ENCODE measurements at regions of chr7 and their contacts with region 1.

Region 1: GRCh38 chr7:44606450-44607254 is at the start of gene OGDH:
- DNase-seq: peak; percentile 98
- H3K4me3 ChIP-seq: peak within 1 kb of the TSS; percentile 60 to 87
- H3K27ac ChIP-seq: peak within 1 kb of the TSS; percentile 94 to 99
- H3K4me1 ChIP-seq: no peaks in the 10 kb centered on the region
- H3K27me3 ChIP-seq: no peaks in the 10 kb centered on the region
- CTCF ChIP-seq: peak in 1 of 4 experiments; percentile 26
- POLR2A ChIP-seq: peak; percentile 96
- total RNA-seq, gene OGDH: 70.4 to 96.9 TPM

Region 2: GRCh38 chr7:44348300-44348699 is 258.4 kb before region 1 on chr7:
- intact Hi-C with region 1: no loop called
- DNase-seq: no peak
- H3K4me3 ChIP-seq: no peak overlapping the region
- H3K27ac ChIP-seq: no peak overlapping the region
- H3K4me1 ChIP-seq: no peaks in the 10 kb centered on the region
- H3K27me3 ChIP-seq: no peaks in the 10 kb centered on the region
- CTCF ChIP-seq: no peak
- POLR2A ChIP-seq: no peak

Region 3: GRCh38 chr7:44581879-44582603 is 24.6 kb before region 1 on chr7 and contains the start of gene TMED4:
- intact Hi-C with region 1: loop called (anchors 2 kb)
- DNase-seq: peak; percentile 100
- H3K4me3 ChIP-seq: peak within 1 kb of the TSS; percentile 73 to 77
- H3K27ac ChIP-seq: peak within 1 kb of the TSS; percentile 92 to 95
- H3K4me1 ChIP-seq: peaks cover 4% of the 10 kb centered on the region
- H3K27me3 ChIP-seq: no peaks in the 10 kb centered on the region
- CTCF ChIP-seq: peak in 2 of 4 experiments; percentile 21 to 29
- POLR2A ChIP-seq: peak; percentile 82
- total RNA-seq, gene TMED4: 227 to 243 TPM

Region 4: GRCh38 chr7:44748045-44748947 is 141.6 kb after region 1 on chr7 and contains the start of gene ZMIZ2:
- intact Hi-C with region 1: loop called (anchors 10 kb)
- DNase-seq: peak; percentile 94
- H3K4me3 ChIP-seq: peak within 1 kb of the TSS; percentile 80 to 91
- H3K27ac ChIP-seq: peak within 1 kb of the TSS; percentile 94 to 96
- H3K4me1 ChIP-seq: peaks cover 3% of the 10 kb centered on the region
- H3K27me3 ChIP-seq: no peaks in the 10 kb centered on the region
- CTCF ChIP-seq: no peak
- POLR2A ChIP-seq: peak; percentile 51
- total RNA-seq, gene ZMIZ2: 27.1 to 42.8 TPM

Region 5: GRCh38 chr7:44797329-44798251 is 190.9 kb after region 1 on chr7:
- intact Hi-C with region 1: loop called (anchors 2 kb)
- DNase-seq: peak; percentile 92
- H3K4me3 ChIP-seq: peak overlapping the region; percentile 91 to 94
- H3K27ac ChIP-seq: peak overlapping the region; percentile 100
- H3K4me1 ChIP-seq: peaks cover 3% of the 10 kb centered on the region
- H3K27me3 ChIP-seq: no peaks in the 10 kb centered on the region
- CTCF ChIP-seq: peak; percentile 19 to 58 (median 43)
- POLR2A ChIP-seq: peak; percentile 70

Region 6: DNA sequence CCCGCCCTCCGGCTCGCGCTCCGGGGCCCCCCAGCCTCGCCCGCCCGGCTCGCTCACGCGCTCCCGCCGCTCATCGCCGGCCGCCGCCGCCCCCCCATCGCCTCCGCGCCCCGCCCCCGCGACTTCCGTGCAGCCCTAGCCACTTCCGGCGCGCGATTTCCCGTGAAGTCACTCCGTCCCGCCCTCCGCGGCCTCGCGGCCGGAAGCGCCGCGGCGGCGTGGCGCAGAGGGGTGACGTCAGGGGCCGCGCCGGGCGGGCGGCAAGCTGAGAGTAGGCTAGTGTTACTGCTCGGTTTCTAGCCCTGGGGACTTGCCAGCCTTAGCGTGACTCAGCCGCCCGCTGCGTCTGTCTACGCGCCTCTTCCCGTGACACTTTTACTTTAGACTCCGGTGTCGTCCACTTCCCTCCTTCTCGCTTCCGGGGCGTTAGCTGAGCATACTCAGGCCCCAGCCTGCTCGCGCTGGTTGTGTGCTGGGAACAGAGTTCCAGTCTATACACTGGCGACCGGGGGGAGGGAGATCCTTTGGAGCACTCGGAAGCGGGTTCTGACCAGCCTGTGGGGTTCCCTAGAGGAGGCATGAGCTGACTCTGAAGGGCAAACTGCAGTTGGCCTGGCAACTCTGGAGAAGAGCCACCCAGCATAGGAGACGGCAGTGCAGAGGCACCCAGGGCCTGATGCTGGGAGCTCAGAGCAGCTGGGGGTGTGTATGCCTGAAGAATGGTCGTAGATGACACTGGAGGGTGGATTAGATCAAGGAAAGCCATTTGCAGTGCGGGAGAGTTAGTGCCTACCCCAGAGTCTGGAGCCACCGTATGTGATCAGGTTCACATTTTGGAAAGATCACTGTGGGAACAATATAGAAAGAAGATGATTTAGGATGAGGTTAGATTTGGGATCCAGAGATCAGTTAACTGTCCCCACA is 279.0 kb after region 1 on chr7 and contains the start of gene PURB:
- intact Hi-C with region 1: loop called (anchors 1 kb)
- DNase-seq: peak; percentile 94
- H3K4me3 ChIP-seq: peak within 1 kb of the TSS; percentile 87 to 93
- H3K27ac ChIP-seq: peak within 1 kb of the TSS; percentile 93 to 94
- H3K4me1 ChIP-seq: peaks cover 21% of the 10 kb centered on the region
- H3K27me3 ChIP-seq: no peaks in the 10 kb centered on the region
- CTCF ChIP-seq: peak in 1 of 4 experiments; percentile 21
- POLR2A ChIP-seq: peak; percentile 89
- total RNA-seq, gene PURB: 21.9 to 22.0 TPM

Region 7: GRCh38 chr7:44986218-44987053 is 379.8 kb after region 1 on chr7:
- intact Hi-C with region 1: loop called (anchors 10 kb)
- DNase-seq: peak; percentile 88
- H3K4me3 ChIP-seq: peak overlapping the region; percentile 40 to 52
- H3K27ac ChIP-seq: peak overlapping the region; percentile 92
- H3K4me1 ChIP-seq: peaks cover 4% of the 10 kb centered on the region
- H3K27me3 ChIP-seq: no peaks in the 10 kb centered on the region
- CTCF ChIP-seq: no peak
- POLR2A ChIP-seq: peak; percentile 91